Prostate gland (tissue), 2 donors: ENCODE measurements at regions of chr4 and their contacts with region 1.

Region 1: DNA sequence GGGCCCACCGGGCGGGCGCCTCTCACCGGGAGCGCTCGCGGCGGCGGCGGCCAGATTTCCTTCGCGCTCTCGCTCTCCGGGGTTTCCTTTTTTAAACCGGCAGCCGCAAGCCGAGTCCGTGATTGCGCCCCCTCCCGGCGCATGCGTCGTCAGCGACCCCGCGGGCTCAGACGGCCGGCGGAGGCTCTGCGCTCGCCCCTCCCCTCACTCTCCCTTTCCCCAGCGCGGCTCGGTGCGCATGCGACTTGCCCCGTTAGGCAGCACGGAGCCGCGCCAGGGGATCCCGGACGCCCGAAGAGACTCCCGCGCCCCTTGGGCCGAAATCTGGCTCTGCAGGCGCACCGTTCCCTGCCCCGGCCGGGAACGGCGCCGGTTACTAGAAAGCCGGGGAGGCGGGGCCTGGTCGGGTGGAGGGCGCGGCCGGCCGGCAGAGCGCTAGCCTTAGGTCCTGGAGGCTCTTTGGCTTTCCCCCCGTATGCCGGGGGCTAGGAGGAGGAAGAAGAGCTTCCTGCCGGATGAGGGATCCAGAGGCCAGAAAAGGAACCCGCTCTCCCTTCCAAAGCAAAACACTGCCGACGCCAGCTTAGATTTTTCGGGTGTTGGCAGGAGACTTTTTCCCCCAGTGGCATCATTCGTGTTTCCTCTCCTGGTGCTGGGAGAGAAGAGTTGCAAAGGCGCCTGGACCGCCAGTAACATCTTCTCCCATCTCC is at the start of gene CLOCK:
- DNase-seq: peak; percentile 74
- H3K4me3 ChIP-seq: peak within 1 kb of the TSS; percentile 72 to 92
- H3K27ac ChIP-seq: peak within 1 kb of the TSS; percentile 96 to 99
- H3K4me1 ChIP-seq: peaks cover 3% of the 10 kb centered on the region
- H3K27me3 ChIP-seq: no peaks in the 10 kb centered on the region
- CTCF ChIP-seq: peak in 3 of 4 experiments; percentile 57 to 75 (median 71)
- POLR2A ChIP-seq: peak; percentile 52
- total RNA-seq, gene CLOCK: 19.5 to 25.4 TPM

Region 2: GRCh38 chr4:55409468-55410171 is 137.3 kb before region 1 on chr4:
- intact Hi-C with region 1: loop called (anchors 5 kb)
- DNase-seq: no peak
- H3K4me3 ChIP-seq: no peak overlapping the region
- H3K27ac ChIP-seq: no peak overlapping the region
- H3K4me1 ChIP-seq: no peaks in the 10 kb centered on the region
- H3K27me3 ChIP-seq: no peaks in the 10 kb centered on the region
- CTCF ChIP-seq: no peak
- POLR2A ChIP-seq: no peak

Region 3: GRCh38 chr4:55853484-55854046 is 306.7 kb after region 1 on chr4 and contains the start of gene EXOC1:
- intact Hi-C with region 1: loop called (anchors 10 kb)
- DNase-seq: peak; percentile 96
- H3K4me3 ChIP-seq: peak within 1 kb of the TSS; percentile 64 to 89
- H3K27ac ChIP-seq: peak within 1 kb of the TSS; percentile 30 to 49
- H3K4me1 ChIP-seq: no peaks in the 10 kb centered on the region
- H3K27me3 ChIP-seq: no peaks in the 10 kb centered on the region
- CTCF ChIP-seq: peak in 1 of 4 experiments; percentile 22
- POLR2A ChIP-seq: peak; percentile 35
- total RNA-seq, gene EXOC1: 24.8 to 39.4 TPM